Activated CD4-positive, alpha-beta memory T cell treated with anti-CD3 and anti-CD28 coated beads for 36 hours (primary cell): ENCODE measurements at regions of chr1 and their contacts with region 1.

Region 1: GRCh38 chr1:174938281-174939007 is 61.3 kb upstream of the CACYBP start:
- DNase-seq: no peak
- H3K4me3 Mint-ChIP-seq: peak overlapping the region; percentile 42
- H3K27ac Mint-ChIP-seq: no peak overlapping the region
- H3K4me1 Mint-ChIP-seq: peaks cover 11% of the 10 kb centered on the region
- H3K27me3 Mint-ChIP-seq: no peaks in the 10 kb centered on the region

Region 2: DNA sequence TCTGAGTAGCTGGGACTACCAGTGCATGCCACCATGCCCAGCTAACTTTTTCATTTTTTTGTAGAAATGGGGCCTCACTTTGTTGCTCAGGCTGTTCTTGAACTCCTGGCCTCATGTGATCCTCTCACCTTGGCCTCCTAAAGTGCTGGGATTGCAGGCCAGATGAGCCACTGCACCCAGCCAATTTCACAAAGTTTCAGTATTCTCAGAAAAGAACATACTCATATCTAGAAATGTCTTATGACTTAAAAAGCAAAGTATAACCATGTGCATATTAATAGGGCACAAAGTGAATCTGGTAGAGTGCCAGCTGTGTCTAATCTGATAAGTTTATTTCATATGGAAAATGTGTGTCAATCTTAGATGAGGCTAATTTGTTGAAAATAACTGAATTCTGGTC is 26.2 kb before region 1 on chr1:
- CTCF ChIA-PET with region 1: interaction called, 4 read pairs
- POLR2A ChIA-PET with region 1: no interaction called
- intact Hi-C with region 1: loop called (anchors 1 kb)
- DNase-seq: peak; percentile 69
- H3K4me3 Mint-ChIP-seq: no peak overlapping the region
- H3K27ac Mint-ChIP-seq: peak overlapping the region; percentile 33
- H3K4me1 Mint-ChIP-seq: peaks cover 59% of the 10 kb centered on the region
- H3K27me3 Mint-ChIP-seq: no peaks in the 10 kb centered on the region